HEK293T (cell line): ENCODE measurements at regions of chr11 and their contacts with region 1.

Region 1: DNA sequence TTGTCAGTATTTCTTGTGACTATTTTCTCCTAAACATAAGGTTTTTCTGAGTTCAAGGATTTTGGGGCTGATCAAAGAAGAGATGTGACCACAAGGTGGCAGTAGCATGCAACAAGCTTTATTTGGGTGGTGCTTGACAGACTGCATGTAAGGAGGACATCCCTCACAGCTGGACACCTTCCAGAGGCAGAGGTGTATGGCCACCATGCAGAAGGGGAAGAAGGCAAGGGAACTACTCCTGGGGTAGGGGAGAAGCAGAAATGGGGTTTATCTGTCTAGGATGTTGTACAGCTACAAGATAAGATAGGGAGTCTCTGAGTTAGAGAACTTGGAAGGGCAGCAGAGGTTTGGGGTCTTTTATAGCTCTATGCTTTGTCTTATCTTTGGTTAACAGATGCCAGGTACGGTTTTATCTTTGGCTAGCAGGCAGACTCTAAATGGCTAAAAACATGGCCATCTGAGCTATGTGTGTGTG is 5.1 kb upstream of the BIRC2 start:
- DNase-seq: peak; percentile 67

Region 2: GRCh38 chr11:102293873-102294601 is 47.8 kb before region 1 on chr11:
- CTCF ChIA-PET with region 1: interaction called, 14 read pairs
- POLR2A ChIA-PET with region 1: no interaction called
- DNase-seq: peak; percentile 42

Region 3: GRCh38 chr11:102367364-102367763 is 25.5 kb after region 1 on chr11:
- CTCF ChIA-PET with region 1: no interaction called
- POLR2A ChIA-PET with region 1: no interaction called
- DNase-seq: no peak

Region 4: DNA sequence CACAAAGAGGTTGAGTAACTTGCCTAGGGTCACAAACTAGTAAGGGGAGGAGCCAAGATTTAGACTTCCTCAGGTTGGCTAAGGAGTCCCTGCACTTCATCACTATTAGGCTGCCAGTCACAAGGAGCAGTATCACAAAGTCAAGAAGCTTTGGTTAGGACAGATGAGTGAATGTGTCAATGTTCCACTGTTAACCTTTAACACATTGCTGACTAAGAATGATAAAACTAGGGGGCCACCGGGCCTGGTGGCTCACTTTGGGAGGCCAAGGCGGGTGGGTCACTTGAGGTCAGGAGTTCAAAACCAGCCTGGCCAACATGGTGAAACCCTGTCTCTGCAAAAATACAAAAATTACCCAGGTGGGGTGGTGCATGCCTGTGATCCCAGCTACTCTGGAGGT is 78.7 kb after region 1 on chr11:
- CTCF ChIA-PET with region 1: no interaction called
- POLR2A ChIA-PET with region 1: no interaction called
- DNase-seq: no peak

Region 5: GRCh38 chr11:102495161-102496042 is 153.5 kb after region 1 on chr11:
- CTCF ChIA-PET with region 1: interaction called, 11 read pairs
- POLR2A ChIA-PET with region 1: no interaction called
- DNase-seq: peak; percentile 55

Region 6: DNA sequence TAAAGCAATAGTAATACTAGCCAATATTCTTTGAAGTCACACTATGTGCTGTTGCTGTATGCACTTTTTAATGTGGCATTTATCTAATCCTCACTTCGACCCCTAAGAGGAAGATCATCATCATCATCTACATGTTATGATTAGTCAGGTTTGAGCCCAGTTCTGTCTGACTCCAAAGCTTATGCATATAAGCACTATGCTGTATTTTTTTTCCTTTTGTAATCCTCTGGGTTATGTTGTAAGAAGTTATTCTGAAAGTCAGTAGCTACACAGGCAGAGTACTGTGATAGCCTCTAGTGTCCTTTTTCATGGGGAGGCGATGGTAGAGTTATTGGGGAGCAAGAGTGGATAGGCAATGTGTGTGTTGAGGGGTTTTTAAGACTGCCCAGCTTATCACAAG is 272.1 kb after region 1 on chr11:
- CTCF ChIA-PET with region 1: interaction called, 17 read pairs
- POLR2A ChIA-PET with region 1: no interaction called
- DNase-seq: no peak

Region 7: DNA sequence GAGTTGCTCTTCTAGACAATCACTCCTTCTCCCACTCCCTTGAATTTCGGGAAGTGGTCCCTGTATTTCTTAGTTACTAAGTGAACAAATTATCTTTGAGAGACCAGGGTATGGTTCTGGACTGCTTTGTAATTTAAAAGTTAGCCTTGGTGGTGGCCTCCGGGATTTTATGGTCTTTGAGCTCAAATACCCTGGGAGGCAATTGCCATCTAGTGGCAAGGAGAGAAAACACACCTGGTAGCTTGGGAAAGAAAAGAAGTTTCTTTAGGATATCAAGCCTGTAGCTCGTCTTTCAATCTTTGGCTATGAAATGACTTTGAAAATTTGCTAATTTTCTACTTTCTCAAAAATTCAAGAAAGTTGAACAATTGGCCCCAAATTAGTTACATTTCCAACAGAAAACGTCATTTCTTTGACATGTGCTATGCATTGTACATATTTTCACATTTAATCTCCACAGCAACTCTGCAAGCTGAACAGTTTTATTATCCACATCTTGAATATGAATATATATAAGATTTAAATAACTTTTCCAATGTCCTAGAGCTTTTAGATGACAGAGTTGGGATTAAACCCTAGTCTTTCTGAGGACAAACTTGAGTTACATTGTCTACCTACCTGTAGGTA is 324.6 kb after region 1 on chr11:
- CTCF ChIA-PET with region 1: interaction called, 16 read pairs
- POLR2A ChIA-PET with region 1: no interaction called
- DNase-seq: peak; percentile 62